ENCODE measurements at regions of chr11 and their contacts with region 1.

Region 1: DNA sequence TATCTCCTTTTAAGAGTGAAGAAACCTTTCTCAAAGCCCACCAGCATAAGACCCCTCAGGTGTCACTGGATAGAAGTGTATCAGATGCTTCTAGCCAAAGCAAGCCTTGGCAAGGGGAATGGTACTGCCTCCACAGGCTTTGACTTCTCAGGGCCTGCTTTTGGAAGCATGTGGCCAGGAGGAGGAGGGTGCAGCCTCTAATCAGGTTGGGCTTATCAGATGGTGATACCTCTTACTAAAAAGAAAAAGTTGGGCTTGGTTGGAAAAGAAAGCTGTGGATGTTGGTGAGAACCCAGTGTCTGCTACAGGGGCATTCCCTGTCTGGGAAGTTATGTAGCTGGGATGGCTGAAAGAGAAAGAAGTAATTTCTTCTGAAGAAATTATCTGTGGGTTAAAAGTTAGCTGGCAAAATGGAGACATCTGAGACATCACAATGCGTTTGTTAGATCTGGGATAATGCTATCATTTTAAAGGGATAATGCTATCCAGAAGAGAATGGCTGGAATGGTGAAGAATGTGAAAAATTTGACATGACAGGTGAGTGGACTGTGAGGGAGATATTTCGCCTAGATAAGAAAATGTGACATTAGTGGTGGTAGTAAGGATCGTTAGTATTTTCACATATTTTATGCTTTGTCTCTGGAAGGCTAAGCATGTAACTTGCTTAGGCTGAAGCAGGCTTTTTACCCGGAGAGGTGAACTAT is 7.2 kb downstream of the APLP2 start:
- DNase-seq: no peak
- ATAC-seq: no peak
- H3K4me3 ChIP-seq: no peak overlapping the region
- H3K27ac ChIP-seq: no peak overlapping the region
- H3K4me1 ChIP-seq: peaks cover 0 to 48% (median 29%) of the 10 kb centered on the region in 9 donors
- H3K27me3 ChIP-seq: no peaks in the 10 kb centered on the region
- CTCF ChIP-seq: no peak

Region 2: DNA sequence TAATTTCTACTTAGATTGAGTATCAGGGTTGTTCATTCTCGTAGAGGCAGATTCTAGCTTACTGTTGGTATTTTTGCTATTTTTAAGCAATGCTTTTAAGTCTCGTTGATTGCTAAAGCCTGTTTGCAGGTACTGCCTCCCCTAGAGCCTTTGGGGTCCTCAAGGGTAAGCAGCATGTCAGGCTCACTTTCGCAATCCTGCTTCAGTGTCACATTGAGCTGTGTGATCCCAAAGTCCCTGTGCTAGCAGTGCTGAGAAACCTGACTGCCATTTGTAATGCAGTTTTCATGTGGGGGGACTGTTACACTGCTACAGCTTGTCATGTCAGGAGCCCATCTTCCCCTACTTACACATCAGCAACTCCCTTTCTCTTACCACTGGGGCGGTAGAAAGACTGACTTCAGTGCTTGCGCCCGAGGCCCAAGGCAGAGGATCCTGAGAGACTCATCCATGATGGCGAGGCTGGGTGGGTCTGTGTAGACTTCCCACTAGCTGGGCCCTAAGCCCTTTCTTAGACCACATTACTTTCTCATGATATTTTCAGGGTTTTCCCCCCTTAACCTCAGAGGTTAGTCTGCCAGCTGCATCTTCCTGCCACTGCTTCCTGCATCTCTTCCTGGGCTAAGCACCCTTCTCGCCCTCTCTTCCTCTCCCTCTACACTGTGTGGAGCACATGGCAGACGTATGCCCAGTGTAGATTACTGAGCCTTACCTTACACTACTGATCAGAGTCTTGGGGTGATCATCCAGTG is 41.9 kb after region 1 on chr11:
- intact Hi-C with region 1: loop called in 5 of 10 experiments (anchors 5 to 10 kb)
- DNase-seq: no peak
- ATAC-seq: no peak
- H3K4me3 ChIP-seq: no peak overlapping the region
- H3K27ac ChIP-seq: no peak overlapping the region
- H3K4me1 ChIP-seq: peaks cover 0 to 72% (median 48%) of the 10 kb centered on the region in 9 donors
- H3K27me3 ChIP-seq: no peaks in the 10 kb centered on the region
- CTCF ChIP-seq: no peak